Pancreas (tissue), 10 donors: ENCODE measurements at regions of chr14 and their contacts with region 1.

Region 1: DNA sequence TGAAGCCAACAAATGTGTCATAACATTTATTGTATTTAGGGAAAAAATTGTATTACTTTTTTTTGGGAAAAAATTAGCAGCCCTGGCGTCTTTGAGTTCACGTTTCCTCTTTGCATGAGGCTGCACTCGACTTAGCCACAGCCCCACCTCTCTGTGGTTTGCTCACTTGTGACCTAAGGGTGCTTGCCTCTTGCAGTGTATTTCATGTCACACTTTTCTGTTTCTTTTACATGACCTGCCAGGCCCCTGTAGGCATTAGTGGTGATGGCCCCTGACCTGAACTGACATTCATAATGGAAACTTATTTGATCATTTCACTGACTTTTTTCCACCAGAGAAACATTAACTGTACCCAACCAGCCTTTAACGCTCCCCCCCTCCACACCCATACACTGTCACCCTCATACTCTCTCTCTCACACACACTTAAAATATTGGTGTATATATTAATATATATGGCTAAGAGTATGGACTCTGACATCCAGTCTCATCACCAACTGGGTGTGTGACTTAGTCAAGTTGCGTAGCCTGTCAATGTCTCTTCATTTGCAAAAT is 122.9 kb downstream of the PRKCH start:
- DNase-seq: no peak
- ATAC-seq: peak in 2 of 4 donors; percentile 45 to 46
- H3K4me3 ChIP-seq: no peak overlapping the region
- H3K27ac ChIP-seq: no peak overlapping the region
- H3K4me1 ChIP-seq: peaks cover 0 to 6% (median 0%) of the 10 kb centered on the region in 3 donors
- H3K27me3 ChIP-seq: no peaks in the 10 kb centered on the region
- CTCF ChIP-seq: no peak

Region 2: GRCh38 chr14:61368114-61368726 is 76.1 kb before region 1 on chr14:
- intact Hi-C with region 1: no loop called
- DNase-seq: no peak
- ATAC-seq: peak in 2 of 4 donors; percentile 38 to 57
- H3K4me3 ChIP-seq: no peak overlapping the region
- H3K27ac ChIP-seq: no peak overlapping the region
- H3K4me1 ChIP-seq: peaks cover 0 to 10% (median 0%) of the 10 kb centered on the region in 3 donors
- H3K27me3 ChIP-seq: no peaks in the 10 kb centered on the region
- CTCF ChIP-seq: no peak

Region 3: DNA sequence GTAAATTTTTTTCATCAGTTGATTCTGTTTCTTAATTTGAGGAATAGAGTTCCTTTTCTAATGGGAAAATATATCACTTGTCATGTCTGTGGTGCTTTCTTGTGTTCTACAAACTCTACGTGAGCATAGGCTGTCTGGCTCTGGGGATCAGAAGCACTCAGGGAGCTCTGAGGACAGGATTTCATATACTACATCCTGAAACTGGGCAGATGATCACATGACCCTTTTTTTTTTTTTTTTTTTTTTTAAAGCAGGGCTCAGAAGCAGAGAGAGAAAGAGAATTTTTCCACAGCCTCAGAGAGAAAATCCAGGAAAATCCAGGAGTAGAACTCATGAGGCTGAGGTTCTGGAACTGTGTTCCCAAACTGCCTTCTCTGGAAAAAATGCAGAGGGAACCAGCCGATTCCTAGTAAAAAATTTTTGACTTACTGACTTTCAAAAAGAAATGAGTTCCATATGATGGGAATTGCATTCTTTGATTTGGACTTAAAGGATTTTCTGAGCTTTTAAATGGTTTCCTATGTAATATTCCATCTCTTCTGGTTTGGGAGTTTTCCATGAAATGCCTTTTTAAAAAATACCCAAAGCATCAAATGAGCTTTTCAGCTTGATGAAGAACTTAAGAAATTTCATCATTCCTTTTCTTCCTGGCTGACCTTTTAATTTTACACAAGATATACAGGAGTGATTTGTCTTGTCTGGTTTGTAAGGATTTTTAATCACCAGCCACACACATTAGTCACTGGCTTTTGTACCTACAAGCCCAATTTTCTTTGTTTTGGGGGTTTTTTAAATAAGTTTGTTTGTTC is 67.9 kb after region 1 on chr14:
- intact Hi-C with region 1: no loop called
- DNase-seq: no peak
- ATAC-seq: peak; percentile 57 to 67 (median 66)
- H3K4me3 ChIP-seq: no peak overlapping the region
- H3K27ac ChIP-seq: peak overlapping the region in 2 of 4 donors; percentile 64 to 77
- H3K4me1 ChIP-seq: peaks cover 18 to 52% (median 35%) of the 10 kb centered on the region in 3 donors
- H3K27me3 ChIP-seq: no peaks in the 10 kb centered on the region
- CTCF ChIP-seq: no peak

Region 4: GRCh38 chr14:61608245-61609165 is 164.2 kb after region 1 on chr14:
- intact Hi-C with region 1: no loop called
- DNase-seq: no peak
- ATAC-seq: peak in 3 of 4 donors; percentile 63 to 79 (median 73)
- H3K4me3 ChIP-seq: no peak overlapping the region
- H3K27ac ChIP-seq: no peak overlapping the region
- H3K4me1 ChIP-seq: peaks cover 0 to 11% (median 9%) of the 10 kb centered on the region in 3 donors
- H3K27me3 ChIP-seq: no peaks in the 10 kb centered on the region
- CTCF ChIP-seq: no peak

Region 5: DNA sequence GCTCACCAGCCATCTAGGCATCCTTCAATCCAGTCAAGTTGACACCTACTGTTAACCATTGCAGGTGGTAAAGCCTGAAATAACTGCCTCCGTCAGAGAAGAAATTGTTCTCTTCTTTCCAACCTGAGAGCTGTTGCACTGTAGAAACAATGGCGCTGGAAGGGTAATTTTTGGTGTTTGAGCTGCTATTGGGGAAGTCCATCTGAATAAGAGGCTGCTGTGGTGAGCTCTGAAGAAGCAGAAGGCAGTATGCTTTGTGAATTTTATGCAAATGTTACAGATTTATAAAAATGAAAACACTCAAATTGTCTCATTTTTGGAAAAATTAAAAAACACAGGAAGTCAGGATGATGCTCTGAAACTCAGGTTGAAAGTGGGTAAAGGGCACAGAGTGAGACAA is 378.2 kb after region 1 on chr14:
- intact Hi-C with region 1: loop called in 1 of 3 experiments (anchors 5 kb)
- DNase-seq: no peak
- ATAC-seq: no peak
- H3K4me3 ChIP-seq: no peak overlapping the region
- H3K27ac ChIP-seq: no peak overlapping the region
- H3K4me1 ChIP-seq: no peaks in the 10 kb centered on the region
- H3K27me3 ChIP-seq: no peaks in the 10 kb centered on the region
- CTCF ChIP-seq: no peak